Endothelial cell of umbilical vein (primary cell): ENCODE measurements at regions of chr22 and their contacts with region 1.

Region 1: DNA sequence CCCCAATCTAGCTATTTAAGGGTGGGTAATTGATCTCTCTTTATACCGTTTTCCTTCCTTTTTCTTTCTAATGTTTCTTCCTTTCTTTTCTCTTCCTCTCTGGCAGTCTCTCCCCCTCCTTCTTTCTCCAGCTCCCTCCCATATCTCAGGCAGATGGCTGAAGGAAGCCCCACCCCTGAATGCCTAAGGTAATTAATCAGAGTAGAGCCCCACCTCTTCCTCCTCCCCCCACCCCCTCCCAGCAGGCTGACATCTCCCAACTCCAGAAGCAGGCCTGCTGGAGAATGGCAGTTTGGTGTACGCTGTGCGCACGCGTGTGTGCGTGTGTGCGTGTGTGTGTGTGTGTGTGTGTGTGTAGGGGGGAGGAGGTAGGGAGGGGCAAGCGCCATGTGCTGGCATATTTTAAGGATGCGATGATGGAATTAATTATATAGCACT is 122.6 kb downstream of the APOL5 start:
- DNase-seq: peak; percentile 96
- H3K4me3 ChIP-seq: peak overlapping the region; percentile 57 to 87 (median 80)
- H3K27ac ChIP-seq: peak overlapping the region; percentile 73
- H3K4me1 ChIP-seq: peaks cover 40% of the 10 kb centered on the region
- H3K27me3 ChIP-seq: no peaks in the 10 kb centered on the region
- CTCF ChIP-seq: no peak
- POLR2A ChIP-seq: peak; percentile 52

Region 2: DNA sequence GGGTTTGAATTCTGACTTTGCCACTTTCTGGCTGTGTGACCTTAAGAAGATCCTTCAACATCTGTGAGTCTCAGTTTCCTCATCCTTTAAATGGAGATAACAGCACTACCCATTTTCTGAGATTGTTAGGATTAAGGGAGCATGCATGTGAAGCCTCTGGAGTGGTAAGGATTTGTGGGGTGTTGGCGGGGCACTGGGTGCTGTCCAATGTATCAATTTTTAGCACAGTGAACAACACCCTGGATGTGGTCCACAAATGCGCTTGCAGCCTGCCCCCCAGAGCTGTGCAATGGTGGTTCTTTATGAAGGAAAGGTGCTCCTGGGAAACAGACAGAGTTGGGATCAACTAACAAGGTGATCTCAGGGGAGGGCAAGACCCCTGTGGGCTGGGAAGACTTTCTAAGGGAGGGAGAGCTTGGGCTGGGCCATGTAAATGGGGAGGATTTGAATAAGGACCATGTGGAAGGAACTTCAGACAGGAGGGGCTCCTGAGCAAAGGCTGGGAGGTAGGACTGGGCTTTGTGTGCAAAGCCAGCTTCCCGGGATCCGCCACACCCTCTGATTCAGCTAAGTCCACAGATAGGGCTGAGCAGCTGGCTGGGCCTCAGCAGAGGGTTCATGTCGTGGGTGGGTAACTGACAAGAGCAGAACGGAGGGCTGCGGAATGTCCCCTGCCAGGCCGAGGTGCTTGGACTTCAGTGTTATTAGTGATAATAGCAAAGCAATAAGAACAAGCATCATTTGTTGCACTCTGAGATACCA is 322.4 kb before region 1 on chr22:
- CTCF ChIA-PET with region 1: no interaction called
- POLR2A ChIA-PET with region 1: no interaction called
- dilution Hi-C with region 1: no loop called
- intact Hi-C with region 1: no loop called
- DNase-seq: no peak
- H3K4me3 ChIP-seq: no peak overlapping the region
- H3K27ac ChIP-seq: no peak overlapping the region
- H3K4me1 ChIP-seq: peaks cover 4% of the 10 kb centered on the region
- H3K27me3 ChIP-seq: peaks cover 7 to 32% of the 10 kb centered on the region in 2 experiments
- CTCF ChIP-seq: no peak
- POLR2A ChIP-seq: no peak

Region 3: DNA sequence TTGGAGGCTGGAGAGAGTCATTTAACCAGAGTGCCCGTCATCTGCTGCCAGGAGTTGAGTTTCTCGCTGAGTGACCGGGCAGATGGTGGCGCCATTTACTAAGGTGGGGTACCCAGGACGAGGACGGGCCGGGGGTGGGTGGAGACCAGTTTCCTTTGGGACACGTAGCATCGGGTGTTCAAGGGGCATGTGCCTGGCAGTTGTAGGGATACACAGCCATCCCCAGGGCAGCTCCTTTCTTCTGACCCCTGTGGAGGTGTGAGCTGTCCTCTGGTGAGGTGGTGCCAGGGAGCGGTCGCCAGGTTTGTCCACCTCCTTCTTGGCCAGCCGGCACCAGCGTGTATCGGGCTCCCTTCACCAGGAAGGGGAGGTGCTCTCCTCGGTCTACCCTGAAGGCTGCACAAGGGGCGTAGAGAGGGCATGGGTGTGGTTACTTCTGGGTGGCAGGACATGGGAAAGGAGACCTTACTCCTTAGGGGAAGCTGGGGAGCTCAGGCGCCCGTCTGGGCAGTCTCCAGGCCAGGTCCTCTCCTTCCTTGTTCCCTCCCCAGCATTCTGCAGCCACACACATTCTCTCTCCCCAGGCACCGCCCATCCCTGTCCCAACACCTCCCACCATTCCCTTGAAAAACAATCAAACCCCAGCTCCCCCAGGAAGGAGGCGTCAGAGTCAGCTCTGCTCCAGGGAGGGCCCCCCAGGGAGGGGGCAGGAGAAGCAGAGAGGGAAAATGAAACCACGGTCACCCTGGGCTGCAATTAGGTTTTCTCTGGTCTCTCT is 212.9 kb before region 1 on chr22:
- CTCF ChIA-PET with region 1: interaction called, 9 read pairs
- POLR2A ChIA-PET with region 1: no interaction called
- dilution Hi-C with region 1: no loop called
- intact Hi-C with region 1: loop called (anchors 1 kb)
- DNase-seq: peak; percentile 76
- H3K4me3 ChIP-seq: peak overlapping the region; percentile 27 to 58 (median 51)
- H3K27ac ChIP-seq: peak overlapping the region; percentile 30
- H3K4me1 ChIP-seq: peaks cover 8% of the 10 kb centered on the region
- H3K27me3 ChIP-seq: no peaks in the 10 kb centered on the region
- CTCF ChIP-seq: peak; percentile 48 to 54
- POLR2A ChIP-seq: peak; percentile 21

Region 4: DNA sequence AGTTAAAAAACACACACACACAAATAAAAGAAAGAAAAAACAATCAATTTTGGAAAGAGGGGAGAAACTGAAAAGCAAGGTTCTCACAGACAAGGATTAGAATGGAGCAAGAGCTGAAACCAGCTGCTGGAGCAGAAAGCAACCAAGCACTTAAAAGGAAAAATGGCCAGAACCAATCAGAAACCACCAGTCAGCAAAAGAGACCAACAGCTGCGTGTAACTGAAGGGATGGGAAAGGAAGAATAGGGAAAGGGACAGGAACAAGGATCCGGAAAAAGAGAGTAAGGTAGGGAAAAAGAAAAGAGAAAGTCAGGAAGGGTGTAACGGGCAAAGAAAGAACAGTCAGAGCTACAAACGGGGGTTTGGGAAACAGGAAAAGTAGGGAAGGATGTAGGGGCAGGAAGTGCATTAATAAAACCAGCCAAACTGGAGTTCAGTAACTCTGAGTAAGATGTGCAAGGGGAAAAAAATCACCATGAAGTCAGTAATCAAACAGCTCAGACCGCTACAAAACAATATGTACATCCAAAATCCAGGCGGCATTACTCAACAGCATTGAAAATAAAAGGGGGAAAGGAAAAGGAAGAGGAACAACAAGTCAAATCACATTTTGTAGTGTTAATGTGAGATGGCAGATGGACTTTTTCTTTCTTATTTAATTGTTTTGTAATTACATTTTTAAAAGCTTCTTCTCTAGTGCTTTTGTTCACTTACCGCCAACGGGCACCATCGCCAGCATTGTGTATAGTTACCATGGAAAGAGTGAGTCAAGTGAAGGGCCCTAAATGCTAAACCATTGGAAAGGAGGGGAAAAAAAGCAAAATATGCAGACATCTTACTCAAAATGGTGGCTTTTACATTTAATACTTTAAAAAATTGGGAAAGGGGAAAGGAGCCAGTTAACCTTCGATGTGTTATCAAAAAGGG is 73.4 kb before region 1 on chr22:
- CTCF ChIA-PET with region 1: interaction called, 8 read pairs
- POLR2A ChIA-PET with region 1: no interaction called
- dilution Hi-C with region 1: no loop called
- intact Hi-C with region 1: loop called (anchors 5 kb)
- DNase-seq: peak; percentile 73
- H3K4me3 ChIP-seq: peak overlapping the region in 2 of 3 experiments; percentile 3 to 47
- H3K27ac ChIP-seq: peak overlapping the region; percentile 58
- H3K4me1 ChIP-seq: peaks cover 18% of the 10 kb centered on the region
- H3K27me3 ChIP-seq: no peaks in the 10 kb centered on the region
- CTCF ChIP-seq: no peak
- POLR2A ChIP-seq: no peak

Region 5: GRCh38 chr22:35883031-35883620 is 42.8 kb after region 1 on chr22:
- CTCF ChIA-PET with region 1: interaction called, 4 read pairs
- POLR2A ChIA-PET with region 1: interaction called, 10 read pairs
- dilution Hi-C with region 1: no loop called
- intact Hi-C with region 1: loop called (anchors 5 kb)
- DNase-seq: peak; percentile 78
- H3K4me3 ChIP-seq: peak overlapping the region in 1 of 3 experiments; percentile 17
- H3K27ac ChIP-seq: peak overlapping the region; percentile 70
- H3K4me1 ChIP-seq: peaks cover 18% of the 10 kb centered on the region
- H3K27me3 ChIP-seq: no peaks in the 10 kb centered on the region
- CTCF ChIP-seq: no peak
- POLR2A ChIP-seq: no peak

Region 6: GRCh38 chr22:35914665-35915476 is 74.5 kb after region 1 on chr22:
- CTCF ChIA-PET with region 1: interaction called, 5 read pairs
- POLR2A ChIA-PET with region 1: interaction called, 3 read pairs
- dilution Hi-C with region 1: no loop called
- intact Hi-C with region 1: loop called (anchors 5 kb)
- DNase-seq: peak; percentile 88
- H3K4me3 ChIP-seq: peak overlapping the region; percentile 26 to 68 (median 28)
- H3K27ac ChIP-seq: peak overlapping the region; percentile 27
- H3K4me1 ChIP-seq: peaks cover 35% of the 10 kb centered on the region
- H3K27me3 ChIP-seq: no peaks in the 10 kb centered on the region
- CTCF ChIP-seq: no peak
- POLR2A ChIP-seq: peak; percentile 36

Region 7: GRCh38 chr22:35921777-35922176 is 81.5 kb after region 1 on chr22:
- CTCF ChIA-PET with region 1: interaction called, 4 read pairs
- POLR2A ChIA-PET with region 1: no interaction called
- dilution Hi-C with region 1: no loop called
- intact Hi-C with region 1: loop called (anchors 1 kb)
- DNase-seq: peak; percentile 90
- H3K4me3 ChIP-seq: no peak overlapping the region
- H3K27ac ChIP-seq: peak overlapping the region; percentile 35
- H3K4me1 ChIP-seq: peaks cover 10% of the 10 kb centered on the region
- H3K27me3 ChIP-seq: no peaks in the 10 kb centered on the region
- CTCF ChIP-seq: peak; percentile 48 to 53
- POLR2A ChIP-seq: no peak

Region 8: GRCh38 chr22:36123673-36124630 is 283.6 kb after region 1 on chr22:
- CTCF ChIA-PET with region 1: interaction called, 3 read pairs
- POLR2A ChIA-PET with region 1: no interaction called
- dilution Hi-C with region 1: no loop called
- intact Hi-C with region 1: loop called (anchors 1 kb)
- DNase-seq: peak; percentile 96
- H3K4me3 ChIP-seq: no peak overlapping the region
- H3K27ac ChIP-seq: peak overlapping the region; percentile 18
- H3K4me1 ChIP-seq: no peaks in the 10 kb centered on the region
- H3K27me3 ChIP-seq: no peaks in the 10 kb centered on the region
- CTCF ChIP-seq: peak; percentile 98 to 99
- POLR2A ChIP-seq: no peak